ENCODE measurements at regions of chr12 and their contacts with region 1.

Region 1: GRCh38 chr12:15151161-15152120 is 69.8 kb downstream of the RERG start:
- DNase-seq: peak in 1 of 2 donors; percentile 32
- ATAC-seq: peak in 7 of 8 donors; percentile 44 to 88 (median 71)
- H3K4me3 ChIP-seq: no peak overlapping the region
- H3K27ac ChIP-seq: peak overlapping the region in 4 of 10 donors; percentile 32 to 48 (median 42)
- H3K4me1 ChIP-seq: peaks cover 0 to 23% (median 13%) of the 10 kb centered on the region in 9 donors
- H3K27me3 ChIP-seq: peaks cover 0 to 8% (median 0%) of the 10 kb centered on the region in 7 donors
- CTCF ChIP-seq: peak in 8 of 9 donors; percentile 38 to 66 (median 52)

Region 2: DNA sequence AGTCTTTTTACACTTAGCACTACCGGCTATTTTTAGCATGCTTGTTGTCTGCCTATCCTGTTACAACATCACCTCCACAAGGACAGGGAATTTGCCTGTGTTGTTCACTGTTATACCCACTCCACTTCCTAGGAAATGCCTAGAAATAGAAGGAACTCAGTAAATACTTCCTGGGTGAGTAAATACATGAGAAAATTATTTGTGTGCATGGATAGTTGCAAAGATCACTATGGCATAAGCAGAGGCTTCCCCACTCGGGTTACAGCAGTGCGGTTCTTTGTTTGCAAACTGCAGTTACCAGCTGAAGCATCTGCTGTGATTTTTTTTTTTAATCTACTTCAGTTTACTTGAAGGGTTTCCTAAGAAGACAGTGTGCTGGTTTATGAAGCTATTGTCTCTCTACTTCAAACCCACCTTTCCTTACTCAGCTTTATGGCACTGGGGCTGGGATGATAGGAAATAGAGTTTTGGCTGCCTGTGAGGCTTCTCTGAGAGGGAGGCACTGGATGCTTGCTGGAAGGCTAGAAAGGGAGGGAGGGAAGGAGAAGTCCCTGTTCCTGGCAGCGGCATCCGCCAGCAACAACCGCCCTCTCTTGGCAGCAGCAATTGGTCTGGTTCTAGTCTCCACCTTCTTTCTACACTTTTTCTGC is 149.6 kb before region 1 on chr12:
- intact Hi-C with region 1: loop called in 1 of 10 experiments (anchors 10 kb)
- DNase-seq: peak; percentile 23 to 40
- ATAC-seq: peak in 7 of 8 donors; percentile 66 to 93 (median 73)
- H3K4me3 ChIP-seq: no peak overlapping the region
- H3K27ac ChIP-seq: no peak overlapping the region
- H3K4me1 ChIP-seq: peaks cover 3 to 14% (median 11%) of the 10 kb centered on the region in 9 donors
- H3K27me3 ChIP-seq: peaks cover 0 to 11% (median 0%) of the 10 kb centered on the region in 7 donors
- CTCF ChIP-seq: no peak

Region 3: DNA sequence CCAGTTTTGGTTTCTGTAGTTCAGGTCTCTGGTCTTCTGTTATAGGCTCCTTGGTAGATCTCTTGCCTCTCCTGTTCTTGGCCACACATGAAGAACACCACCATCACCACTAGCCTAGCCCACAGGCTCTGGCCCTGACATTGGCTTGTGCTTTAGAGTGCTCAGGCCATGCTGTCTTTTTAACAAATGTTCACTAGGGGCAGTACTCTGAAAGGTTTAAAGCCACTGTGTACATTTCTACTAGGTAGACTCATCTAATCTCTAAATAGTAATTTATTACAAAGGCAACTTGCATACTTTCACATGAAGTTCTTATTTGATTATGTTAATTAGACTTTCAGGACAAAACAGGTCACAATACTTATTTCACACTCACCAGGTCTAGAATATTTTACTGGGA is 140.3 kb before region 1 on chr12:
- intact Hi-C with region 1: loop called in 2 of 10 experiments (anchors 10 kb)
- DNase-seq: no peak
- ATAC-seq: no peak
- H3K4me3 ChIP-seq: no peak overlapping the region
- H3K27ac ChIP-seq: no peak overlapping the region
- H3K4me1 ChIP-seq: no peaks in the 10 kb centered on the region
- H3K27me3 ChIP-seq: peaks cover 0 to 14% (median 9%) of the 10 kb centered on the region in 7 donors
- CTCF ChIP-seq: peak in 1 of 9 donors; percentile 8

Region 4: DNA sequence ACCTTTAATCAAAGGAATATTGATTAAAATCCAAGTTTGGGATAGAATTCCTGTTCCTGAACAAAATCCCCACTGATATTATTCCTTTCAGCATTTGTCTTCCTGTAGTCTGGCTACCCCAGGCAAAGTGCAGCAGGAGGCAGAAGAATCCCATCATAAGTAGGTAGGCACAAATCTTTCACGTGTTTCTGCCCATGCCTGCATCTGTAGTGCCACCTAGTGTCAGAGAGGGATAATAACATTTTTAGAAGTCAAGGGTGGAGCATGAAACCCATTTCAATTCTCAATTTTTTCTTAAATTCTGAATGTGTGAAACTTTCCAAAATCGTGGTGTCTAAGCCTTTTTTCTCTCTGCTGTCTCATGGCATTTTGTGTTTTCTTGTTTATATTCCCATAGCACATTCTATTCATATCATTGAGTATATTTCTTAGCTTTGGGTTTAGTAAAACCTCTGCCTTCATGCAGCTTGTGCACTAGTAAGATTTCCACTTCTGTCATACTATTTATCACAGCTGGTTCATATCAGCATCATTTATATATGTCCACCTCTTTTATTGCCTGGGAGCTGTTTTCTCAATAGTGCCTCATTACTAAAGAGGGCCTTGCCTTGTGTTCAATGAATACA is 117.6 kb after region 1 on chr12:
- intact Hi-C with region 1: loop called in 2 of 10 experiments (anchors 5 kb)
- DNase-seq: peak in 1 of 2 donors; percentile 24
- ATAC-seq: peak in 6 of 8 donors; percentile 28 to 69 (median 56)
- H3K4me3 ChIP-seq: no peak overlapping the region
- H3K27ac ChIP-seq: no peak overlapping the region
- H3K4me1 ChIP-seq: no peaks in the 10 kb centered on the region
- H3K27me3 ChIP-seq: peaks cover 0 to 6% (median 0%) of the 10 kb centered on the region in 7 donors
- CTCF ChIP-seq: peak; percentile 71 to 91 (median 85)